Cardiac septum (tissue), 1 donor: ENCODE measurements at regions of chr12 and their contacts with region 1.

Region 1: GRCh38 chr12:56117778-56118687 is at the start of gene ZC3H10:
- DNase-seq: peak; percentile 98
- total RNA-seq, gene ZC3H10: 6.0 TPM

Region 2: GRCh38 chr12:55738123-55739024 is 379.7 kb before region 1 on chr12:
- intact Hi-C with region 1: loop called (anchors 10 kb)
- DNase-seq: peak; percentile 82

Region 3: GRCh38 chr12:56104109-56104814 is 13.8 kb before region 1 on chr12 and contains the start of gene PA2G4:
- intact Hi-C with region 1: loop called (anchors 1 kb)
- DNase-seq: peak; percentile 99
- total RNA-seq, gene PA2G4: 61.6 TPM

Region 4: DNA sequence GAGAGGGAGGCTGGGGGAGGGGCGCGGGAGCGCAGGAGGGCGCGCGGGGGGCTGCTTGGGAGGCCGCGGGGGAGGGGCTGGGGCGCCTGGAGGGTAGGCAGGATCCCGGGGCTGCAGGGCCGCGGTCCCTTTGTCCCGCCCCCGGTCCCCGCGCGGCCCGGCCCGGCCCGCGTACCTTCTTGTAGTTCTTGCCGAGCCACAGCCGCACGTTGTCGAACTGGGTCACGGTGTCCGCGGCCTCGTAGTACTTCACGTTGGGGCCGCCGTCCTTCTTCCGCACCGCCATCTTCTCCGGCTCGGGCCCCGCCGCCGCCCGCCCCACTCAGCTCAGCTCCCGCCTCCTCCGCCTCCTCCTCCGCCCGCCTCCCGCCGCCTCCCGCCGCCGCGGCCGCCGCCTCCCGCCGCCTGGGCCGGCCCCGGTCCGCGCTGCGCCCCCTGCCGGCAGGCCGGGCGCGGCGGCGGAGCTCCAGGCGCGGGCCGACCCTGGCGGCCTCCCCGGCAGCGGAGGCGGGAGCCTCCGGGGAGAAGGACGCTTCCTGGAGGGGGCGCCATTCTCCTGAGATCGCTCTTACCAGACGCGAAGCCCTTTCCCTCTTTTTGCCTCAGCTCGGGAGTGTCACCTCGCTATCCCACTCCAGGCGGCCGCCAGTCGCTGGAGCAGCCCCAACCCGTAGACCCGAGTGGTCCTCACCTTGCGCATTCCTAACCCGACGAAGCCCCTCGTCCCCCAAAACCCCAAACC is 71.3 kb after region 1 on chr12 and contains the start of gene SMARCC2:
- intact Hi-C with region 1: loop called (anchors 2 kb)
- DNase-seq: peak; percentile 94
- total RNA-seq, gene SMARCC2: 71.5 TPM

Region 5: GRCh38 chr12:56258057-56258819 is 140.2 kb after region 1 on chr12 and contains the start of gene ANKRD52:
- intact Hi-C with region 1: loop called (anchors 5 kb)
- DNase-seq: peak; percentile 90
- total RNA-seq, gene ANKRD52: 28.8 TPM

Region 6: GRCh38 chr12:56880125-56881075 is 762.4 kb after region 1 on chr12:
- intact Hi-C with region 1: no loop called
- DNase-seq: no peak